OCI-LY7 (cell line): ENCODE measurements at regions of chr1 and their contacts with region 1.

Region 1: DNA sequence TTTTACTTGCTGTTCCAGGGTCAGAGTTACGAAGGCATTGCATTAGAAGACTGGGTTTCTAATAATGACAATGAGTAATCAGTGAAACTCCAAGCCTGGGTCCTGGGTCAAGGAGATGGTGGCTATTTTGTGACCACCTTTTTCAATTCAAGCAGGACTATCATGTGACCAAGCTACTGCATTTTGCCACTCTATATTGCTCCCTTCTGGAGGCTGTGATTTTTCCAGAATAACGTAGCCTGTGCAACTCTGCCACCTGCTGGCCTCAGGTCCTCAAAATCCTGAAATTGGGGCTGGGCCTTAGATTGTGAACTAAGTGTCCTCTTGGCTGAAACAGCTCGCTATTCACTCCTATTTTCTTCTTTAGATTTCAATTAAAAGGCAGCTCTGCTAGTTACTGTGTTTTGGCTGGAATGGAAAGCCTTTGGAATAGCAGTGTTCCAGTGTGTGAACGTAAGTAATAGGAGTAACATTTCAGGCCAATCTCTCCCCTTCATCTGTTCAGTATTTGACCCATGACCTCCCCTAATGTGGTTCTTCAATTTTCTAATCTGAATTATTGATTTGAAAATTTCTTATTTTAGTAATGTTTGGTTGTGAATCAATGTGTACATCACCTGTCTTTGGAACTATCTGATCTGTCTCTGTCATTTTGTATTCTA is 52.9 kb upstream of the CD46 start:
- DNase-seq: peak; percentile 65
- H3K4me3 ChIP-seq: no peak overlapping the region
- H3K27ac ChIP-seq: no peak overlapping the region
- H3K4me1 ChIP-seq: no peaks in the 10 kb centered on the region
- CTCF ChIP-seq: peak; percentile 86

Region 2: DNA sequence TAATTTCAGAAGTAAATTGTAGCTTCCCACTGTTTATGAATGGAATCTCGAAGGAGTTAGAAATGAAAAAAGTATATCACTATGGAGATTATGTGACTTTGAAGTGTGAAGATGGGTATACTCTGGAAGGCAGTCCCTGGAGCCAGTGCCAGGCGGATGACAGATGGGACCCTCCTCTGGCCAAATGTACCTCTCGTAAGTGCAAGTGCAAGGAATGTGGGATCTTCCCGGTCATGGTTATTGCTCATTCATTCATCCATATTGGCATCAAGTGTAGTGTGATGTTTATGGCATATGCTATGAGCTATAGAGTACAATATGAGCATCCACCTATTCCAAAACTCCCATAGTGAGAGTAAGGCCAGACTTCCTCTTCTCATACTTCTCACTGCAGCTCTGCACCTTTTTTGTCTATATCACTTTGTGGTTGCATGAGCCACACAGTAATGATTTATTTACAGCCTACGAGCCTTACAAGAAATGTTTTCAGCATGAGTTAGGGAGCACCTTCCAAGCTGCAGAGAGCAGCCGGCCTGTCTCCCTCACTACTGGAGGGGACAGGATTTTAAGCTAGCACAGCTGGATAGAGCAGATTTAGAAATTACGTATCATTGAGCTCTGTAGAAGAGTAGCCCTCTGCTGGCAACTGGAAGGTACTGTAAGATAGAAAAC is 78.9 kb before region 1 on chr1:
- CTCF ChIA-PET with region 1: no interaction called
- POLR2A ChIA-PET with region 1: no interaction called
- intact Hi-C with region 1: no loop called
- DNase-seq: peak; percentile 67
- H3K4me3 ChIP-seq: no peak overlapping the region
- H3K27ac ChIP-seq: no peak overlapping the region
- H3K4me1 ChIP-seq: no peaks in the 10 kb centered on the region
- CTCF ChIP-seq: peak; percentile 84

Region 3: DNA sequence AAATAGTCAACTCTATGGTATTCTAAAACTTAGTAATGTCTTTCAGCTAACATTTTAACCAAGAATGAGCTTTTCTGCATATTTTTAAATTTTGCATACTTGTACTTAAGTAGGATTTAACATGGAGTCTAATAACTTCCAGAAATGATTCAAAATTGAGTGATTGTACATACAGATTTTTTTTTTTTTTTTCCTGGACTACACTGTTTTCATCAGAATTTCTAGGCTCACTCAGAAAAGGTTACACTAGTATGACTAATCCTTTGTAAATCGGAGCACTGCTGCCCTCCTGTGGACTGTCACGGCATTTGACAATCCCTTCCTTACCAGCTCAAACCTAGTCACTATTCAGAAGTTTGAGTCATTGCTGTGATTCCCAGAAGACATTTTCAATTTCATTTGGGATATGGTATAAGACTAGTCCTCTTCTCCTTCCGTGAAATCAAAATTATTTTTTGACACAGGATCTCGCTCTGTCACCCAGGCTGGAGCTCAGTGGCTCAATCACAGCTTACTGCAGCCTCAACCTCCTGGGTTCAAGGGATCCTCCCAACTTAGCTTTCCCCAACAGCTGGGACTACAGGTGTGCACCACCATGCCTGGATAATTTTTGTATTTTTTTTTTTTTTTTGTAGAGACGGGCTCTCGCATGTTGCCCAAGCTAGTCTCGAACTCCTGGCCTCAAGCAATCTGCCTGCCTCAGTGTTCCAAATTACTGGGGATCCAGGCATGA is 98.4 kb after region 1 on chr1:
- CTCF ChIA-PET with region 1: interaction called, 4 read pairs
- POLR2A ChIA-PET with region 1: interaction called, 6 read pairs
- intact Hi-C with region 1: loop called (anchors 2 kb)
- DNase-seq: peak; percentile 78
- H3K4me3 ChIP-seq: no peak overlapping the region
- H3K27ac ChIP-seq: no peak overlapping the region
- H3K4me1 ChIP-seq: no peaks in the 10 kb centered on the region
- CTCF ChIP-seq: peak; percentile 94

Region 4: DNA sequence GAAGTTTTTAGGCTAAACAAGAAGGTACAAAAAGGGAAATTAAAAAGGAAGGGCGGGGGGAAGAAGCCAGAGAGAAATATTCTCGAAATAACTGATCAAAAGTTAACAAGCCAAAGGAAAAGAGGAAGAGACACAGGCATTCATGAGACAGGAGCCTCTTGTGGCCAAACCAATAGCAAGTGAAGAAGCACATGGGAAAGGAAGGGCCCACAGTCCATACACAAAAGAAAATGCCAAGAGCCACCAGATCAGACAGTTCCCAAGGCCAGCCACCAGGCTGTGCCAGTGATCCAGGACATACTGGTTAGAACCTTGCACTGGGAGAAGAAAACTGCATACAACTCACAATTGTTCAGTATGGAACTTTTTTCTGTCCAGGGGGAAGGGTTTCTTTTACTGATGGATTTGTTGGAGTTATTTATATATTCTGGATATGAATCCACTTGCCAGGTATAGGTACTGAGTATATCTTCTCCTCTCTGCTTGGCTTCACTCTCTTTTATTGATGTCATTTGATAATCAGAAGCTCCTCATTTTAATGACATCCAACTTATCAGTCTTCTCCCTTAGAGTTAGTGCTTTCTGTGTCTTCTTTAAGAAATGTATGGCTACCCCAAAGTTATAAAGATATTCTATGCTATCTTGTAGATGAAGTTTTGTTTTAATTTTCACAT is 129.7 kb after region 1 on chr1:
- CTCF ChIA-PET with region 1: no interaction called
- POLR2A ChIA-PET with region 1: no interaction called
- intact Hi-C with region 1: no loop called
- DNase-seq: peak; percentile 68
- H3K4me3 ChIP-seq: no peak overlapping the region
- H3K27ac ChIP-seq: no peak overlapping the region
- H3K4me1 ChIP-seq: peaks cover 46% of the 10 kb centered on the region
- CTCF ChIP-seq: peak; percentile 77